ENCODE measurements at regions of chr20 and their contacts with region 1.

Region 1: GRCh38 chr20:37042986-37043972 is 52.5 kb downstream of the RBL1 start:
- DNase-seq: no peak
- H3K27ac ChIP-seq: no peak overlapping the region
- CTCF ChIP-seq: no peak

Region 2: DNA sequence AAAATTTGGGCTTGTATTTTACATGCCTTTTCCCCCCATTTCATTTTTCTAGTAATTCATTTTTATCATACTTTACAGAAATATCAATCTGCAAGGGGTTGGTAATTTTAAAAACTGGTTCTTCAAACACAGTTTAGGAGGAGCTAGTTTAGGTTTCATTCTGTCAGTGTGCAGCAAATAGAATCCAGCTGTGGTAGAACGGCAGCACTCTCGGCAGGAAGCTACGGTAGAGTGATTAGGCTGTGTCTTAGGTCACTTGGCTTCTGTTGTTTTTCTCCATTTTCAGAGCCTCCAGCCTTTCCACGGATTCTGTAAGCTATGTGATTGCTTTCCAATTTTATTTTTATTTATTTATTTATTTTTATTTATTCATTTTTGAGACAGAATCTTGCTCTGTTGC is 134.7 kb before region 1 on chr20:
- CTCF ChIA-PET with region 1: no interaction called
- POLR2A ChIA-PET with region 1: no interaction called
- DNase-seq: no peak
- H3K27ac ChIP-seq: no peak overlapping the region
- CTCF ChIP-seq: no peak

Region 3: GRCh38 chr20:37095599-37096414 is 52.5 kb after region 1 on chr20 and contains the start of gene RBL1:
- CTCF ChIA-PET with region 1: interaction called, 3 read pairs
- POLR2A ChIA-PET with region 1: interaction called, 11 read pairs
- DNase-seq: peak; percentile 95
- H3K27ac ChIP-seq: peak within 1 kb of the TSS; percentile 84
- CTCF ChIP-seq: peak; percentile 17; the same call in 1 of the 2 replicates

Region 4: DNA sequence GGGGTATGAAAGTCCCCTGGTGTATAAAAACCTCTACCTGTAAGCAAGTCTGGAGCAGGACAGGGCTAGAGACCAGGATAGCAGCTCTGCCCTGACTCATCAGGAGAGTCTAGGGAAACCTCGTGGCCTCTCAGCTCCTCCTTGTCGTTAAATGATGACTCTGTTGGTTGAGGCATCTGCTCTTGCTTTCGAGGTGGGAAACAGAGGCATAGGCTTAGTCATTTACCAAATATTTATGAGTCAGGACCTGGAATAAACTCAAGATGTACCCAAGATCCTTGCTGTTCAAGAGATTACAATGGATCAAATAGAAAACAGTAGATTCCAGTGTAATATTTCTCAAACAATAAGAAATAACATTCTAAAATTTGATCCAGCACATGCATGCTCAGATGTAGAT is 251.7 kb after region 1 on chr20:
- CTCF ChIA-PET with region 1: no interaction called
- POLR2A ChIA-PET with region 1: no interaction called
- DNase-seq: peak; percentile 99
- H3K27ac ChIP-seq: peak overlapping the region; percentile 93
- CTCF ChIP-seq: no peak